ENCODE measurements at regions of chr5 and their contacts with region 1.

Region 1: DNA sequence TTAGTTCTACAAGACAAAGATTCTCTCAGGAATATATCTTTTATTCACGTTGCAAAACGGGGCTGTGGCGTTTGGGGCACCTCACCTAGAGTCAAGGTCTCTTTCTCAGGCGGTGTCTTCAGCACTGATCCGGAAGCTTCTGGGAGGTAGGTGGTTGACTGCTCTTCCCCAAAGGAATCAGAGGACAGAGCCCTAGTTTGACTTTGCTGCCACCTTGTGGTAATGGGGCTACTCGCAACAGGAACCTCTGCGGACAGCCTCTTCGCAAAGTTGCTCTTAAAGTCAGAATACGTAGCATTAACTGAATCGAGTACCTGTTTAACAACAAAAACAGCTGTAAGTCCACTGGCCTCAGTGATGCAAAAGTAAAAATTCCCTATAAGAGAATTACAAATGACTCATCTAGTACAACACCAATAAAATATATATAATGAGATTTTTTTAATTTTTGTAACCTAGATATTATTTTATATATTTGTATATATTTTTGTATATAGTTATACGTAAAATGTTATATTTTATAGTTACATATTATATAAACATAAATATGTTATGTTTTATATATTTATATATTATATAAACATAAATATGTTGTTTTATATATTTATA is 13.3 kb upstream of the GPX8 start:
- DNase-seq: peak; percentile 55 to 91 (median 74)
- ATAC-seq: peak; percentile 88 to 96 (median 92)
- H3K4me3 ChIP-seq: peak overlapping the region in 1 of 2 donors; percentile 27
- H3K4me3 Mint-ChIP-seq: peak overlapping the region in 1 of 3 donors; percentile 58
- H3K27ac ChIP-seq: no peak overlapping the region
- H3K27ac Mint-ChIP-seq: peak overlapping the region in 1 of 2 donors; percentile 52
- H3K4me1 ChIP-seq: peaks cover 12 to 14% of the 10 kb centered on the region in 2 experiments
- H3K4me1 Mint-ChIP-seq: peaks cover 15 to 17% (median 16%) of the 10 kb centered on the region in 3 donors
- H3K27me3 ChIP-seq: no peaks in the 10 kb centered on the region
- H3K27me3 Mint-ChIP-seq: peaks cover 8% of the 10 kb centered on the region in 2 donors

Region 2: DNA sequence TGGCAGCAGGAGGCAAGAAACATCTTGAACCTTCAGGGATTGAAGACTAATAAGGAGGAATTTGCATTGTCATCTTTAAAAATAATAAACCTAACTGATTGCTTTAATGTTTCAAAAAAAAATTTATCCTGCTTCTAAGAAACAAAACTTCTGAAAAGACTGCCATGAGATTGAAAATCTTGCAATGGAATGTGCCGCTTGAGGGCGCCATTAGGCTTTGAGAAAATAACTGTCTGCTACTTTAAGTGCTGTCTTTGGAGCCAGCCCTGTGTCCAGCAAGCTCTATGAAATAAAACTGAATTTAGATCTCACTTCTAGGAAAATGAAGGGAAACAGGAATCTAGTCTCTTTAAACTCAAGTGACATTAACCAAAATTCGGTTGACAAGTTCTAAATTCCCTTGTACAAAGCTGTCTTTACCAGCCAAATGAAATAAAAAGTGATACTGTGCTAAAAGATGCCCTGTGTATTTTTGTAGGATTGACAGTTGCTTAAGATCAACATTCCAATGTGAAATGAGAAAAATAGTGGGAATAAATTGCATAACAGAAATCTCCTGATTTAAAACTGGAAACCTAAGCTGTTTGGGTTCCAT is 240.6 kb before region 1 on chr5:
- CTCF ChIA-PET with region 1: interaction called, 8 to 19 read pairs
- POLR2A ChIA-PET with region 1: no interaction called
- DNase-seq: peak in 33 of 35 experiments; percentile 10 to 79 (median 57)
- ATAC-seq: peak in 2 of 4 experiments; percentile 38 to 41
- H3K4me3 ChIP-seq: no peak overlapping the region
- H3K4me3 Mint-ChIP-seq: no peak overlapping the region
- H3K27ac ChIP-seq: no peak overlapping the region
- H3K27ac Mint-ChIP-seq: no peak overlapping the region
- H3K4me1 ChIP-seq: peaks cover 6 to 11% of the 10 kb centered on the region in 2 experiments
- H3K4me1 Mint-ChIP-seq: peaks cover 10 to 11% (median 11%) of the 10 kb centered on the region in 3 donors
- H3K27me3 ChIP-seq: no peaks in the 10 kb centered on the region
- H3K27me3 Mint-ChIP-seq: peaks cover 10 to 12% of the 10 kb centered on the region in 2 donors